HepG2 (cell line): ENCODE measurements at regions of chr12 and their contacts with region 1.

Region 1: GRCh38 chr12:11015775-11016430 is 6.5 kb downstream of the TAS2R19 start:
- DNase-seq: peak; percentile 85
- ATAC-seq: peak; percentile 96
- H3K4me3 ChIP-seq: no peak overlapping the region; a peak in 1 of 6 replicates
- H3K27ac ChIP-seq: peak overlapping the region; percentile 68
- H3K4me1 ChIP-seq: peaks cover 46% of the 10 kb centered on the region
- H3K27me3 ChIP-seq: no peaks in the 10 kb centered on the region
- CTCF ChIP-seq: no peak
- EP300 ChIP-seq: peak in 1 of 2 experiments; percentile 87; a peak in 2 of 4 replicates
- POLR2A ChIP-seq: no peak
- RAD21 ChIP-seq: no peak

Region 2: GRCh38 chr12:11067514-11067913 is 51.6 kb after region 1 on chr12:
- CTCF ChIA-PET with region 1: no interaction called
- POLR2A ChIA-PET with region 1: no interaction called
- in situ Hi-C with region 1: loop called (anchors 5 kb)
- intact Hi-C with region 1: loop called (anchors 1 kb)
- DNase-seq: no peak
- ATAC-seq: no peak
- H3K4me3 ChIP-seq: no peak overlapping the region
- H3K27ac ChIP-seq: no peak overlapping the region
- H3K4me1 ChIP-seq: peaks cover 25% of the 10 kb centered on the region
- H3K27me3 ChIP-seq: no peaks in the 10 kb centered on the region; a peak in 1 of 5 replicates
- CTCF ChIP-seq: no peak
- EP300 ChIP-seq: no peak
- POLR2A ChIP-seq: no peak
- RAD21 ChIP-seq: no peak